Heart right ventricle (tissue), 16 donors: ENCODE measurements at regions of chr2 and their contacts with region 1.

Region 1: GRCh38 chr2:230411570-230412370 is 4.2 kb upstream of the SP100 start:
- DNase-seq: peak; percentile 64 to 75
- ATAC-seq: peak; percentile 79 to 85 (median 84)
- H3K4me3 ChIP-seq: peak overlapping the region; percentile 57 to 88 (median 74)
- H3K27ac ChIP-seq: peak overlapping the region; percentile 86 to 98 (median 96)
- H3K4me1 ChIP-seq: peaks cover 9 to 78% (median 42%) of the 10 kb centered on the region in 9 donors
- H3K27me3 ChIP-seq: no peaks in the 10 kb centered on the region
- CTCF ChIP-seq: no peak

Region 2: GRCh38 chr2:230219419-230220331 is 192.1 kb before region 1 on chr2 and contains the start of gene SP110:
- intact Hi-C with region 1: loop called in 1 of 10 experiments (anchors 10 kb)
- DNase-seq: peak; percentile 75 to 84
- ATAC-seq: peak; percentile 93 to 98 (median 96)
- H3K4me3 ChIP-seq: peak within 1 kb of the TSS; percentile 48 to 80 (median 66)
- H3K27ac ChIP-seq: peak within 1 kb of the TSS; percentile 35 to 90 (median 81)
- H3K4me1 ChIP-seq: peaks cover 0 to 44% (median 24%) of the 10 kb centered on the region in 9 donors
- H3K27me3 ChIP-seq: no peaks in the 10 kb centered on the region
- CTCF ChIP-seq: no peak
- total RNA-seq, gene SP110: 7.6 to 38.6 (median 10.4) TPM

Region 3: GRCh38 chr2:230326453-230327417 is 85.0 kb before region 1 on chr2 and contains the start of gene SP140L:
- intact Hi-C with region 1: loop called in 1 of 10 experiments (anchors 5 kb)
- DNase-seq: peak; percentile 69 to 75
- ATAC-seq: peak; percentile 89 to 97 (median 96)
- H3K4me3 ChIP-seq: peak within 1 kb of the TSS; percentile 9 to 65 (median 54)
- H3K27ac ChIP-seq: peak within 1 kb of the TSS in 9 of 10 donors; percentile 54 to 97 (median 83)
- H3K4me1 ChIP-seq: peaks cover 0 to 41% (median 19%) of the 10 kb centered on the region in 9 donors
- H3K27me3 ChIP-seq: no peaks in the 10 kb centered on the region
- CTCF ChIP-seq: no peak
- total RNA-seq, gene SP140L: 3.0 to 10.8 (median 4.4) TPM

Region 4: GRCh38 chr2:230356084-230356483 is 55.7 kb before region 1 on chr2:
- intact Hi-C with region 1: no loop called
- DNase-seq: no peak
- ATAC-seq: peak in 1 of 8 donors; percentile 76
- H3K4me3 ChIP-seq: no peak overlapping the region
- H3K27ac ChIP-seq: peak overlapping the region in 1 of 10 donors; percentile 19
- H3K4me1 ChIP-seq: peaks cover 0 to 8% (median 0%) of the 10 kb centered on the region in 9 donors
- H3K27me3 ChIP-seq: no peaks in the 10 kb centered on the region
- CTCF ChIP-seq: no peak

Region 5: GRCh38 chr2:230447455-230448451 is 36.0 kb after region 1 on chr2:
- intact Hi-C with region 1: loop called in 1 of 10 experiments (anchors 5 kb)
- DNase-seq: no peak
- ATAC-seq: no peak
- H3K4me3 ChIP-seq: no peak overlapping the region
- H3K27ac ChIP-seq: peak overlapping the region in 2 of 10 donors; percentile 6 to 69
- H3K4me1 ChIP-seq: peaks cover 0 to 57% (median 0%) of the 10 kb centered on the region in 9 donors
- H3K27me3 ChIP-seq: no peaks in the 10 kb centered on the region
- CTCF ChIP-seq: no peak